Mammary epithelial cell (primary cell): ENCODE measurements at regions of chr15 and their contacts with region 1.

Region 1: GRCh38 chr15:59384507-59384906 is 11.8 kb upstream of the MYO1E start:
- DNase-seq: no peak
- H3K4me3 ChIP-seq: no peak overlapping the region
- H3K27ac ChIP-seq: no peak overlapping the region
- H3K4me1 ChIP-seq: no peaks in the 10 kb centered on the region
- H3K27me3 ChIP-seq: no peaks in the 10 kb centered on the region
- CTCF ChIP-seq: no peak

Region 2: GRCh38 chr15:59437817-59438562 is 53.5 kb after region 1 on chr15 and contains the start of gene FAM81A:
- CTCF ChIA-PET with region 1: no interaction called
- dilution Hi-C with region 1: loop called (anchors 5 kb)
- in situ Hi-C with region 1: no loop called
- intact Hi-C with region 1: no loop called
- DNase-seq: peak; percentile 69
- H3K4me3 ChIP-seq: peak within 1 kb of the TSS; percentile 49 to 61 (median 58)
- H3K27ac ChIP-seq: no peak within 1 kb of the TSS
- H3K4me1 ChIP-seq: peaks cover 13% of the 10 kb centered on the region
- H3K27me3 ChIP-seq: peaks cover 3% of the 10 kb centered on the region
- CTCF ChIP-seq: no peak
- total RNA-seq, gene FAM81A: 0.33 to 2.9 TPM